Mucosa of descending colon (tissue), 3 donors: ENCODE measurements at regions of chr9 and their contacts with region 1.

Region 1: GRCh38 chr9:113657703-113658544 is 194.4 kb downstream of the RGS3 start:
- DNase-seq: peak; percentile 73 to 94 (median 89)
- ATAC-seq: peak; percentile 94
- H3K4me3 ChIP-seq: no peak overlapping the region
- H3K4me1 ChIP-seq: no peaks in the 10 kb centered on the region
- CTCF ChIP-seq: peak; percentile 87

Region 2: DNA sequence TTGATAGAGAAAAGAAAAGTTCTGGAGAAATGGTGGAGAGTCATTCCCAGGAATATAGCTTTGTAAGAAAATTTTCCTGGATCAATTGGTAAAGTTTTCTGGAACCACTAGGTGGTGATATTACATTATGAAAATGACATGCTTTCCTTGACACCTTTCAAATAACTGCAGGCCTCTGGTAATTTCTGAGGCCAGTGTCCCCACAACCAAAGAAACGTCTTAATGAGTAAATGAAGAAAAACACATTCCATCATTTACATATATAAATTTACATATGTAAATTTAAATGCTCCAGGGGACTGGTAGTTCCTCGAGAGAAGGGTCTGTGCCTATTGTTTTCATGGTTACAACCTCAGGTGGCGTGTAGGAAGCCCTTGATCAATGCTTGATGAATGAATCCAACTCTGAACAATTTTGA is 211.6 kb before region 1 on chr9:
- intact Hi-C with region 1: loop called (anchors 5 kb)
- DNase-seq: no peak
- ATAC-seq: peak; percentile 55
- H3K4me3 ChIP-seq: no peak overlapping the region
- H3K4me1 ChIP-seq: no peaks in the 10 kb centered on the region
- CTCF ChIP-seq: peak; percentile 24

Region 3: DNA sequence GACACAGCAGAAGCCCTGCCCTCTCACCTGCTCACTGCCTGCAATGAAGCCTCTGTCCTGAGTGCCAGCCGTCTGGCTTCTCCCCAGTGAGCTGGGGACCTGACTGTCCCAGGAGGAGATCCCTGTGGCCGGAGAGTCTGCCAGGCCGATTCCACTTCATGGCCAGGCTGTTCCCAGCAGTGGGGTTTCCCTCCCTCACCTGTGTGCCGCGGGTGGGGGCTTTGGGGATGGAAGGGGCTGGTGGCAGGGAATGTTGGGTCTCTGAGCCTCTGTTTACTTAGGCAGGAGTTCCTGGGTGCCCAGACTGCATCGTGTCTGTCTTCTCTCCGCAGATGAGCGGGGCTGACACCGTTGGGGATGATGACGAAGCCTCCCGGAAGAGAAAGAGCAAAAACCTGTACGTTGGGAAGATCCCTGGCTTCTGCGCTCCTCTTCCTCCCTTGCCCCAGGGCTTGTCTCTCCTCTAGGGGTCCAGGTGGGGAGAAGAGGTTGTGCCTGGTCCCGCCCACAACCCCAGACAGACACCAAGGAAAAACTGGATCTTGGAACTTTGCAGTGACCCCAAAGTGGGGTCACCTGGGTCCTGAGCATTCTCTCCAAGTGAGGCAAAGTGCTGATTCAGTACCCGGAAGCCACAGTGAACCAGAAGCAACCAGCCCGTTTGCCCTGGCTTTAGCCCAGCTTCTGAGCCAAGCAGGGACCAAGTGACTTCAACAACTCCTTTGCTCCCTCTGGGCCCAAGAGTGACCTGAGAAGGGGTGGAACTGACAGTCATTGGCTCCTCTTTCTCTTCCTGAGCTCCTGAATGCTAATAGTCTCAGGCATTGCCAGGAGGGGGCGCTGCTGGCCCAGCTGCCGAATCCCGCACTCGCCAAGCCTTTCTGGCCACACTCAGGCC is 66.7 kb before region 1 on chr9:
- intact Hi-C with region 1: loop called (anchors 2 to 5 kb)
- DNase-seq: peak in 2 of 3 donors; percentile 83 to 85
- ATAC-seq: peak; percentile 76
- H3K4me3 ChIP-seq: no peak overlapping the region
- H3K4me1 ChIP-seq: no peaks in the 10 kb centered on the region
- CTCF ChIP-seq: peak; percentile 67

Region 4: DNA sequence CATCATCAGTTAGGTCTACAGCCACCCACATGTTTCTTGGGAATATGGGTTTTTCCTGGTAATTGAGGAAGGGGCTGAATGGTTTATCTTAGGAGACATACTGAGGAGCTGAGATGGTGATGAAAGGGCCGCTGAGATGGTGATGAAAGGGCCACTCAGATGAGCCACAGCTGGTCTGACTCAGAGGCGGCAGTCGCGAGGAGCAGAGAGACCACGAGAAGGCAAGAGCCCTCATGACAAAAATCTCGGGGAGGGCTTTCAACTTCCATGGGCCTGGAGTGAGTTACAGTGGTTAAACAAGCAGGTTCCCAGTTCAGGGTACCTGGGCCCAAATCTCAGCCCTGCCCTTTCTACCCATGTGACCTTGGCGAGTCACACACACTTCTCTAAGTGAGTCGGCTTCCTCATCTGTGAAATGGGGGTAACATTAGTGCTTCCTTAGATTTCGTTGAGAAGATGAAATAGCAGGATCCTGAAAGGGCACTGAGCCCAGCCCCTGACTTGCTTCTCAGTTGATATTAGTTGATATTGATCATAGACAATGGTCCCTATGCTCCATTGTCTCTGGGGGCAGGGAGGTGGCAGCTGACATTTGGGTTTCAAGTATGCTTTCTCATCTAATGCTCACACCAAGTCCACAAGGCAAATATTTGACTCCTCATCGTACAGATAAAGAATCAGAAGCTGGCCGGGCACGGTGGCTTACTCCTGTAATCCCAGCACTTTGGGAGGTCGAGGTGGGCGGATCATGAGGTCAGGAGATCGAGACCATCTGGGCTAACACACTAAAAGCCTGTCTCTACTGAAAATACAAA is 24.9 kb before region 1 on chr9:
- intact Hi-C with region 1: no loop called
- DNase-seq: no peak
- ATAC-seq: no peak
- H3K4me3 ChIP-seq: no peak overlapping the region
- H3K4me1 ChIP-seq: no peaks in the 10 kb centered on the region
- CTCF ChIP-seq: no peak

Region 5: DNA sequence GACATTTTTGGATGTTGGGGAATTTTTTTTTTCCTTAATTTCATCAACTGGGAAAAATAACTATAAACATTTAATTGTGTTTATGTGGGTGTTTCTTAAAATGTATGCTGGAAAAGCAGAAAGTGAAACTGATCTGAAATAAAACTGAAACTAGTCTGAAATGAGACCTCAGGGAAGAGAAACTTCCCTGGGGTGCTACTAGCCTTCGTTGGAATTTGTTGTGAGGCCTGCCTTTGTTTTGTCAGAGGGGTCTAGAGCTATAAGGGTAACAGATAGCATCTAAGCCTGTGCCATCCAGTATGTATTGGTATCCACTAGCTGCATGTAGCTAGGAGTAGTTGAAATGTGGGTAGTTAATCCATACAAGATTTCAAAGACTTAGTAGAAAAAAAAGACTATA is 228.5 kb after region 1 on chr9:
- intact Hi-C with region 1: loop called in 1 of 2 experiments (anchors 10 kb)
- DNase-seq: no peak
- ATAC-seq: peak; percentile 54
- H3K4me3 ChIP-seq: no peak overlapping the region
- H3K4me1 ChIP-seq: no peaks in the 10 kb centered on the region
- CTCF ChIP-seq: no peak